ENCODE measurements at regions of chr10 and their contacts with region 1.

Region 1: GRCh38 chr10:49419005-49419404 is 23.1 kb upstream of the DRGX start:
- DNase-seq: peak; percentile 75
- ATAC-seq: peak; percentile 93
- H3K4me3 ChIP-seq: peak overlapping the region in 1 of 2 experiments; percentile 34; a peak in 1 of 4 replicates
- H3K27ac ChIP-seq: peak overlapping the region; percentile 54
- H3K4me1 ChIP-seq: peaks cover 14 to 16% of the 10 kb centered on the region in 2 experiments
- H3K27me3 ChIP-seq: no peaks in the 10 kb centered on the region
- CTCF ChIP-seq: no peak
- POLR2A ChIP-seq: no peak
- RAD21 ChIP-seq: peak; percentile 11; the same call in 1 of the 2 replicates

Region 2: GRCh38 chr10:48981310-48981907 is 437.6 kb before region 1 on chr10:
- CTCF ChIA-PET with region 1: no interaction called
- POLR2A ChIA-PET with region 1: no interaction called
- RAD21 ChIA-PET with region 1: no interaction called
- intact Hi-C with region 1: loop called (anchors 5 kb)
- DNase-seq: peak; percentile 42
- ATAC-seq: peak; percentile 99
- H3K4me3 ChIP-seq: no peak overlapping the region
- H3K27ac ChIP-seq: no peak overlapping the region
- H3K4me1 ChIP-seq: no peaks in the 10 kb centered on the region
- H3K27me3 ChIP-seq: no peaks in the 10 kb centered on the region
- CTCF ChIP-seq: peak; percentile 53 to 88 (median 86); a peak in 5 of 6 replicates
- POLR2A ChIP-seq: no peak
- RAD21 ChIP-seq: peak; percentile 72

Region 3: DNA sequence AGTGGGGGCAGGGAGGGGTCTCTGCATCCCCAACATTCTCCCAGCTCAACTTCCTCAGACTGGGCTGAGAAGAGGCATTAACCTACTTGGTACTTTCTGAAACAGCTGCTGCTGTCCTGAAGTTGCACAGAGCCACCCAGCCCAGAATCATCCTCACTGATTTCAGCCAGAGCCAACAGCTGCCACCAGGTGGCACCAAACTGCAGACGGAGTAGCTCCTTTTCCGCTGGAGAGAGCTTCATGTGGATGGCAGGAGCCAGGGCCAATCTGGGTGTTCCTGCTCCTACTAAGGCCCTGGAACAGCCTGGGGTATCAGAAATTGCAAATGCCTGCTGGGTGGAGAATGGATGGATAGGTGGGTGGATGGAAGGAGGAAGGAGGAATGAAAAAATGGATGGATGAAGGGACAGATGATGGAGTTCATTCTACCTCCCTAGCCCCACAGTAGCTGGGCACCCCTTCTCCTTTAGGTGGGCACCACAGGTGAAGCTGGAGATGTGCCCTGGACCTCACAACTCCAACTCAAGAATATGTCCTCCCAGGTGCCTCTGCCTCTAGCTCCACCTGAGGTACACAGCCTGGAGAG is 11.4 kb before region 1 on chr10:
- CTCF ChIA-PET with region 1: interaction called, 25 read pairs
- POLR2A ChIA-PET with region 1: no interaction called
- RAD21 ChIA-PET with region 1: no interaction called
- intact Hi-C with region 1: no loop called
- DNase-seq: peak; percentile 57
- ATAC-seq: peak; percentile 93
- H3K4me3 ChIP-seq: no peak overlapping the region
- H3K27ac ChIP-seq: no peak overlapping the region
- H3K4me1 ChIP-seq: no peaks in the 10 kb centered on the region
- H3K27me3 ChIP-seq: peaks cover 36% of the 10 kb centered on the region
- CTCF ChIP-seq: peak; percentile 85 to 96 (median 94)
- POLR2A ChIP-seq: no peak
- RAD21 ChIP-seq: peak; percentile 88

Measured in HCT116 (cell line).